HAP-1 (cell line): ENCODE measurements at regions of chr9 and their contacts with region 1.

Region 1: DNA sequence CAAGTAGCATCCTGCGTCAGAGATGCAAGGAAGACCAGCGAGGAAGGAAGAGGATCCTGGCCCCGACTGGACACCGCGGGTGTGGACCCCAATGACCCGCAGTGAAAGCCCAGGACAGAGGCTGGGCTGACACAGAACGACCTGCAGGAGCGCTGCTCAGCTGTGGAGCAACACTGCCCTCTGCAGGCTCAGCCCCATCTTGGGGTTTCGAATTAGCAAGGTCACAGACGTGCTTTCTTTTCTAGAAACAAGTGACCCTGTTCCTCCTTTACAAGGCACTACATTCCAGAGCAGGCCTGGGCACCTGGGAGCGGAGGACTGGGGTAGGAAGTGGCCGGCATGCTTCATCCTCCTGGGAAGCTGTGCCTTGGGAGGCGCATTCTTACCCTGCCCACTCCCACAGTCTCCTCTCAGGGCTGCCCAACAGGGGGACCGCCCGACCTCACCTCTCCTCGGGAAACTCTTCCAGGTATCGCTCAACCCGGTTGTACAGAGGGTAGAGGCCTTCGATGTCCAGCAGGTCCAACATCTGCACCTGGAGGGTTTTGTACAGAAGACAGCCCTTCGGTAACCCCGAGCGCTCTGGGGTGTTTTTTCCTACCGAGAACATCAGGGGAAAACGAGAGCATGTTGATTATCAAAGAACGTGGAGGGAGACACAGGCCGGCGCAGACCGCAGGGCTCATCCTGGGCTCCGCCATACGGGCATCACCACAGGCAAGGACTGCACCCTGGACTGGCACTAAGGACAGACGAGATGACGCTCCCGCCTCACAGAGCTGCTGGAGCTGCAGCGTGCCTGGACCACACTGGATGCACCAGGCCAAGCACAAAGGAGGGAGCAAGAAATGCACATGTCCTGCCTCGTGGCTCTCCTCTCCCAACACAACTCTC is 35.0 kb downstream of the IPPK start:
- DNase-seq: peak; percentile 53 to 86
- H3K4me3 ChIP-seq: no peak overlapping the region
- H3K4me1 ChIP-seq: no peaks in the 10 kb centered on the region
- H3K27me3 ChIP-seq: no peaks in the 10 kb centered on the region

Region 2: GRCh38 chr9:92133949-92134604 is 500.9 kb before region 1 on chr9:
- in situ Hi-C with region 1: loop called (anchors 10 kb)
- DNase-seq: peak; percentile 70 to 93
- H3K4me3 ChIP-seq: peak overlapping the region; percentile 10; the same call in 1 of the 2 replicates
- H3K4me1 ChIP-seq: no peaks in the 10 kb centered on the region
- H3K27me3 ChIP-seq: no peaks in the 10 kb centered on the region

Region 3: DNA sequence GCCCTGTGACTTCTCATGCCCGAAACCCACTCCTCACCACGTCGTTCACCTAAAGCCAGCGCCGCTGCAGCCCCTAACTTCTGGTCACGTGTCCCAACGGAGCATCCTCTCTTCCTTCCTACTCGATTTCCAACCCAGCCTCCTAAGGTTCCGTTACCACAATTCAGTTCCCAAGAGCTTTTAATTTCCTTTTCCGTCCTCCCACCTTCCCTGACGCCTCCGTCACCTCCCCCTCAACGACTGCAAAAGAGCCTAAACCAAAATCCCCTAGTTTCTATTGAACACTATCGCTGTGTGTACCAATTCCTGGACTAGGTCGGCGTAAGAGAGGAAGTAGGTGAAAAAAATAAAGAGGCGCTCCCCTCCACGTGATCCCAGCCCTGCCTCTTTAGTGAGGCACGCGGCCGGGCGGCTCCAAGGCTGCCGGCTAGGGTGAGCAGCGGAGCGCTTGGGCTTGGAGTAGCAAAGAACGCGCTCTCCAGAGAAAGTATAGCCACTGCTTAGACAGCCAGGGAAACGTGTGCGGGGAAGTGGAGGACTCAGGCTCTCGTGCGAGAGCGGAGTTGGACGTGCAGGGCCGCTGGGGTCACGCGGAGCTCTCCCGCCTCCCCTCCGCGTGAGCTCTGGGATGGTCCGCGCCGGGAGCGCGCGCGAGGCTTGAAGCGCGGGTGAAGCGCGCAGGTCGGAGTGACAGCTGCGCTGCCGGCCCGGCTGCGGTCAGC is 309.5 kb before region 1 on chr9 and contains the starts of genes CENPP and NOL8:
- in situ Hi-C with region 1: loop called (anchors 10 kb)
- DNase-seq: peak; percentile 83 to 86
- H3K4me3 ChIP-seq: peak within 1 kb of the TSS; percentile 74
- H3K4me1 ChIP-seq: peaks cover 9% of the 10 kb centered on the region; the same call in 1 of the 2 replicates
- H3K27me3 ChIP-seq: no peaks in the 10 kb centered on the region

Region 4: GRCh38 chr9:92501671-92502393 is 133.1 kb before region 1 on chr9:
- in situ Hi-C with region 1: loop called (anchors 10 kb)
- DNase-seq: peak; percentile 37 to 61
- H3K4me3 ChIP-seq: no peak overlapping the region
- H3K4me1 ChIP-seq: peaks cover 28% of the 10 kb centered on the region
- H3K27me3 ChIP-seq: no peaks in the 10 kb centered on the region

Region 5: GRCh38 chr9:92576175-92576574 is 58.8 kb before region 1 on chr9:
- in situ Hi-C with region 1: no loop called
- DNase-seq: no peak
- H3K4me3 ChIP-seq: no peak overlapping the region
- H3K4me1 ChIP-seq: no peaks in the 10 kb centered on the region
- H3K27me3 ChIP-seq: no peaks in the 10 kb centered on the region

Region 6: DNA sequence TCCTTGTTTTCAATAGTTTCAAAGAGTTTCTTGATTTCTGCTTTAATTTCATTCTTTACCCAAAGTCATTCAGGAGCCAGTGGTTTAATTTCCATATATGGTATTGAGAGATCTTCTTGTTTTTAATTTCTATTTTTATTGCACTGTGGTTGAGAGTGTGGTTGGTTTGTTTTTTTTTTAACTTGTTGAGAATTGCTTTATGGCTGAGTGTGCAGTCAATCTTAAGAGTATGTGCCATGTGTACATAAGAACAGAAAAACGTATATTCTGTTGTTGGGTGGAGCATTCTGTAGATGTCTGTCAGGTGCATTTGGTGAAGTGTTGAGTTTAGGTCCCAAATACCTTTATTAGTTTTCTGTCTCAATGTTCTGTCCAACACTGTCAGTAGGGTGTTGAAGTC is 61.7 kb after region 1 on chr9:
- in situ Hi-C with region 1: no loop called
- DNase-seq: no peak
- H3K4me3 ChIP-seq: no peak overlapping the region
- H3K4me1 ChIP-seq: no peaks in the 10 kb centered on the region
- H3K27me3 ChIP-seq: no peaks in the 10 kb centered on the region

Region 7: DNA sequence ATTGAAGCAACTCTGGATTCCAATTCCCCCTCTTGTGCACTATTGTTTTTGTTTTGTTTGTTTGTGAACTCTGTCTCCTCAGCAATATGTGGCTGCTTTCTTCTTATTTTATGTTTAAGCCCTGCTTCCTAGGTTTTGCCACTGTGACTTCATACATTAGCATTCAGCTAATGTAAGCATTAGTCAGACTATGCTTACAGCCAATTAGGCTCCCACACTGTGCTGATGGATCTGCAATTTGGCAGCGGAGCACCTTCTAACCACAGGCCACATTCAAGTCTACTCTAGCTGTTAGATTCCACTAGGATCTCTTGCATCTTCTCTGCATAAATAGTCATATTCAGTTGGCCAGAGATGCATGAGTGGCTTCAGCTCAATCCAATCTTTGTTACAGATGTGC is 139.3 kb after region 1 on chr9:
- in situ Hi-C with region 1: no loop called
- DNase-seq: no peak
- H3K4me3 ChIP-seq: no peak overlapping the region
- H3K4me1 ChIP-seq: no peaks in the 10 kb centered on the region; the same call in 1 of the 2 replicates
- H3K27me3 ChIP-seq: no peaks in the 10 kb centered on the region; the same call in 1 of the 2 replicates